Sigmoid colon (tissue), 7 donors: ENCODE measurements at regions of chr7 and their contacts with region 1.

Region 1: DNA sequence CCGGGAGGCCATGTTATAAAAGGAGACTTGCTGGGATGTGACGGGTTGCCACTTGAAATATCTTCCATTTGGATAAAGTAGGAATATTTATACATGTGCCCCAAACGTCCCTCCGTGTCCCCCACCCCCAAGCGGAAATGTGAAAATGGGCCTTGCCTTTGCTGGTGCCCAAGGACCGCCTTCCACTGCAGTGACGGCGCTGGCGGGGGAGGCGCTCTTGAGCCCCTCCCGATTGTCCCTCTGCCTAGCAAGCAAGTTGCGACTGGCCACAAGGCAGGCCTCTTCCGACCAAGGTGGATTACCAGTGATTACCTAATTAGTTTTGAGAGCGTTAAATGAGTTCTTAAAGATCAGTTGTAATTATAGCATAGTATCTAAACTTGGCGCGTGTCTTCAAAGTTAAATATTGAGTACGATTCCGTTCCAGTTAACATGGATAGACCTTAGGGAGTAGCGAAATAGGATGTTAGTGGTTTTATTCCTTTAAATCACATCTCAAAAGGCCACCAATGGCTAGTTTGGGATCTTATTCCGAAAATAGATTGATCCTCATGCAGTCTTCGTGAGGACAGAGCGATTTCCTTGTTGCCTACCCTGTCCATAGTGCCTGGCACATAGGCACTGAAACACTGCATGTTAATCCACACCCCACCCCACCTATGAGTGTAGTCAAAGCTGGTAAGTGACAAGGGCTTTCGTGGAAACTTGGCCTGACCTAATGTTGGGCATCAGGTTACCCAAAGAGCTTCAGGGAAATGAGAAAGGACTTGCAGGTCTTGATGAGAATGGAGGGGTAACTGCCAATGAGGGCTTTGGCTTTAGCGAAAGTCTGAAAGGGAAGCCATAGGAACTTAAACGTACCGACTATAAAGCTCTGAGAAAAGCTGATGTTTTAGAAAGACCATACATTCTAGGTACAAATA is 1.1 kb downstream of the PPIA start:
- DNase-seq: peak; percentile 95
- H3K4me3 ChIP-seq: peak overlapping the region; percentile 76 to 97 (median 95)
- H3K27ac ChIP-seq: peak overlapping the region; percentile 99 to 100 (median 100)
- H3K4me1 ChIP-seq: peaks cover 0 to 35% (median 26%) of the 10 kb centered on the region in 4 donors
- H3K27me3 ChIP-seq: no peaks in the 10 kb centered on the region
- CTCF ChIP-seq: peak in 2 of 4 experiments; percentile 31 to 35
- EP300 ChIP-seq: no peak
- POLR2A ChIP-seq: peak; percentile 10 to 29

Region 2: GRCh38 chr7:44606450-44607254 is 190.9 kb before region 1 on chr7 and contains the start of gene OGDH:
- intact Hi-C with region 1: loop called (anchors 2 kb)
- DNase-seq: peak; percentile 100
- H3K4me3 ChIP-seq: peak within 1 kb of the TSS; percentile 70 to 97 (median 78)
- H3K27ac ChIP-seq: peak within 1 kb of the TSS; percentile 97 to 100 (median 98)
- H3K4me1 ChIP-seq: peaks cover 0 to 32% (median 25%) of the 10 kb centered on the region in 4 donors
- H3K27me3 ChIP-seq: no peaks in the 10 kb centered on the region
- CTCF ChIP-seq: no peak
- EP300 ChIP-seq: peak in 2 of 4 donors; percentile 66 to 86
- POLR2A ChIP-seq: peak; percentile 57 to 97
- total RNA-seq, gene OGDH: 65.5 to 102 (median 98.3) TPM

Region 3: DNA sequence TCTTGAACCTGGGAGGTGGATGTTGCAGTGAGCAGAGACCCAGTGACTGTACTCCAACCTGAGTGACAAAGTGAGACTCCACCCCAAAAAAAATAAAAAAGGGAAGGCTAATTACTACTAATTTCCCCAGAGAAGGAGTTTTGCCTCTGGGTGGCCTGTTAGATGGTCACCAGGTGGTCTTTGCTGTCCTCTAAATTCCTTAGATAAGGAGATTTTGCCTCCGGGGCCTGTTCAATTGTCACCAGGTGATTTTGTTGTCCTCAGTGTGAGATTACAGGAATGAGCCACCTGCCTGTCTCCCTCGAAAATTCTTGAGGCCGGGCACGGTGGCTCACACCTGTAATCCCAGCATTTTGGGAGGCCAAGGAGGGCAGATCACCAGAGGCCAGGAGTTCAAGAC is 73.3 kb before region 1 on chr7:
- intact Hi-C with region 1: no loop called
- DNase-seq: no peak
- H3K4me3 ChIP-seq: no peak overlapping the region
- H3K27ac ChIP-seq: no peak overlapping the region
- H3K4me1 ChIP-seq: no peaks in the 10 kb centered on the region
- H3K27me3 ChIP-seq: no peaks in the 10 kb centered on the region
- CTCF ChIP-seq: no peak
- EP300 ChIP-seq: no peak
- POLR2A ChIP-seq: no peak

Region 4: DNA sequence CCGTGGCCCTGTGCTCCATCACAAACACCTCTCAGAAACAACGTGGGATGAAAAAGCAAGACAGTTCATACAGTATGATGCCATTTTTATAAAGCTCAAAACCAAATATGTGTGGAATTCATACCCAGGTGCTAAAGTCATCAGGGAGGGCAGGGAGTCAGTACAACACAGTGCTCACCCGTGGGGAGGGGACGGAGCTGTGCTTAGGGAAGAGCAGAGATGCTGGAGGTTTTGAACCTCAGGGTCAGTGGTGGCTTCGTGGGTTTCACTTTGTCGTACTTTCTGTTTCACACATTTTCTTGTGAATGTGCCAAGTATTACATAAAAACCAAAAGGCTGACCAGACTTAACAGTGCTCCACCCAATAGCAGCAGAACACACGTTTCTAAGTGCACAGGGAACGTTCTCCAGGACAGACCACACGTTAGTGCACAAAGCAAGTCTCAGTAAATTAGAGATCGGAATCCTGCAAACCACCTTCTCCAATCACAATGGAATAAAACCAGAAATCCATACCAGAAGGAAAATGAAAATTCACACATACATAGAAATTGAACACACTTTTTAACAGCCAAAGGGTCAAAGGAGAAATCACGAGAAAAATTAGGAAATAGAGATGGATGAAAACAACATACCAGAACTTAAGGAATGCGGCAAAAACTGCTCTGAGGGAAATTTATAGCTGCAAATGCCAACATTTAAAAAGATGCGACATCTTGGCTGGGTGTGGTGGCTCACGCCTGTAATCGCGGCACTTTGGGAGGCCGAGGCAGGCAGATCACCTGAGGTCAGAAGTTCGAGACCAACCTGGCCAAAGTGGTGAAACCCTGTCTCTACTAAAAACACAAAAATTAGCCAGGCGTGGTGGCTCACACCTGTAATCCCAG is 27.6 kb before region 1 on chr7:
- intact Hi-C with region 1: loop called (anchors 2 kb)
- DNase-seq: no peak
- H3K4me3 ChIP-seq: peak overlapping the region in 2 of 4 donors; percentile 4 to 9
- H3K27ac ChIP-seq: peak overlapping the region; percentile 72 to 86 (median 81)
- H3K4me1 ChIP-seq: peaks cover 0 to 39% (median 36%) of the 10 kb centered on the region in 4 donors
- H3K27me3 ChIP-seq: no peaks in the 10 kb centered on the region
- CTCF ChIP-seq: no peak
- EP300 ChIP-seq: no peak
- POLR2A ChIP-seq: no peak